ENCODE measurements at regions of chr14 and their contacts with region 1.

Region 1: DNA sequence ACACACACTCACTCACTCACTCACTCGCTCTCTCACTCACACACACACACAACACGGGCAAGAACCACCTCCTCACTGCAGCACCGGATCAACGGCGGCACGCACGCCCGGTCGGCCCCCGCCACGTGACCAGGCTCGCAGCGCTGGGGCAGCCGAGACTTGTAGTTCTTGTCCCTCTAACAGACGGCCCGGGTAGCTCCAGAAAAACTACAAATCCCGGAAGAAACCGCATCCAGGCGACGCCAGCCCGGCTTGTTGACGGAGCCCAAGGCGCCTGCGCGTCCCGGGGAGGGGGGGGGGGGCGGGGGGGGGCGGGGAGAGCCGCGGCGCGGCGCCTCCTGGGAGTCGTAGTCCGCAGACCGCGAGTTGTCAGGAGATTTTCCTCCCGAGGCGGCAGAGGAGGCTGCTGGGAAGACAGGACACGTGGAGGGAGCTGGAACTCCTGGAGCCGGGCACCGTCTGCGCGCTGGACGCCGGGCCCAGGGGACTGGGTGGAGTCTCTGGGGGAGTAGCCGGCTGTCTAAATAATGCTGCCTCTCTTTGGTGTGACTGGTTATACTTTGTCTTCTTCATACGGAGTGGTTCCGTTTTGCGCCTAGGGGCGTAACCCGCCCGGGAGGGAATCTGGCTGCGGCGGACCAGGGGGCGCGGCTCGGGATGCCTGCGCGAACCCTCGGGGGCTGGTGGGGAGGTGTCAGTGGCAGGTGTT is at the start of gene MAX:
- H3K4me3 Mint-ChIP-seq: peak within 1 kb of the TSS; percentile 80
- H3K27ac Mint-ChIP-seq: peak within 1 kb of the TSS; percentile 81
- H3K4me1 Mint-ChIP-seq: peaks cover 18% of the 10 kb centered on the region
- H3K27me3 Mint-ChIP-seq: no peaks in the 10 kb centered on the region

Region 2: DNA sequence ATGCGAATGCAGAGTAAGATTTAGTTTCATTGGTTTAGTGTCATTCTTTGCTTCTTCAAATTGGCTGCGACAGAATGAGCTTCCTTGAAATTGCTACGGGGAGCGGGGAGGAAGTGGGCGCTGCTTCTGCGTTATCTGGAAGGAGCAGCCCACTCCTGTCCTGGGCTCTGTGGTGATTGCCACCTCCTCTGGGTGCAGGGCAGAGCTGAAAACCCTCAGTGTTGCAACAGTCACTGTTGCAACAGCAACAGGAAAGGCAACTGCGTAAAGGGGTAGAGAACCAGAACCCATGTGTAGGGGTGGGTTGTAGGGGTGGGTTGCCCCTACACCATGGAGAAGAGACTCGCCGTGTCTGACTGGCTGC is 58.0 kb before region 1 on chr14:
- intact Hi-C with region 1: loop called (anchors 1 kb)
- H3K4me3 Mint-ChIP-seq: peak overlapping the region; percentile 59
- H3K27ac Mint-ChIP-seq: peak overlapping the region; percentile 86
- H3K4me1 Mint-ChIP-seq: peaks cover 74% of the 10 kb centered on the region
- H3K27me3 Mint-ChIP-seq: no peaks in the 10 kb centered on the region

Region 3: GRCh38 chr14:65117769-65118701 is 15.4 kb after region 1 on chr14:
- intact Hi-C with region 1: no loop called
- H3K4me3 Mint-ChIP-seq: no peak overlapping the region
- H3K27ac Mint-ChIP-seq: no peak overlapping the region
- H3K4me1 Mint-ChIP-seq: peaks cover 6% of the 10 kb centered on the region
- H3K27me3 Mint-ChIP-seq: no peaks in the 10 kb centered on the region

Region 4: GRCh38 chr14:65156568-65157366 is 54.2 kb after region 1 on chr14:
- intact Hi-C with region 1: loop called (anchors 2 kb)
- H3K4me3 Mint-ChIP-seq: peak overlapping the region; percentile 60
- H3K27ac Mint-ChIP-seq: peak overlapping the region; percentile 78
- H3K4me1 Mint-ChIP-seq: peaks cover 26% of the 10 kb centered on the region
- H3K27me3 Mint-ChIP-seq: peaks cover 29% of the 10 kb centered on the region

Region 5: DNA sequence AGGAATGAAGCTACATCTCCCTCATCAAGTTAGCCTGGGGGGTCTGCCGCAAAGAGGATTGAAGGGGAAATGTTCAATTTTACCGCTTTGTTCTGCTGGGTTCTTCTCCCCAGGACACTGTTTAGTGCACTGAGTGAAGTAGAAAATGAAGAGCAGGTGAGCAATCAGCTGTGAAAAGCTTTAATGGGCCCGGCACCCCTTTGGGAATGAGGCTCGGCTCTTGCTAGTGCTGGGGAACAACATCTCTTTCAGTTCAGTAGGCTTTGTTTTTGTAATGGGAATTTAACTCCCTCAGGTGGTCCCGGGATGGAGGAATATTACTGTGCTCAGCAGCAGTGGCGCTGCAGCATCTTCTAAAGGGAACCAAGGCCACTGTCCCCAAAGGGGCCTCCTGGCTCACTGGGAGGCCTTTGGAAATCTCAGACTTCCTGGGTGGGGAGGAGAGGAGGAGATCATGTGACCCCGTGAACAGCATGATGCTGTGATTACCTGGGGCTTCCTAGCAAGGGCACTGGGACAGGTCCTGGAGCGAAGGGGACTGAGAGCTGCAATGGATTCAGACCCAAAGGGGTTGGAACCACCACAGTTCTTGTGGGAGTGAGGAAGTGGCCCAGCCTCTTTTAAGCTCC is 84.9 kb after region 1 on chr14:
- intact Hi-C with region 1: no loop called
- H3K4me3 Mint-ChIP-seq: no peak overlapping the region
- H3K27ac Mint-ChIP-seq: no peak overlapping the region
- H3K4me1 Mint-ChIP-seq: no peaks in the 10 kb centered on the region
- H3K27me3 Mint-ChIP-seq: peaks cover 17% of the 10 kb centered on the region

Measured in dendritic cell treated with granulocyte-macrophage colony-stimulating factor and Interleukin-4, amounts not matched to agents 40 ng/mL and 50 ng/mL, for 4 days (primary cell).